ENCODE measurements at regions of chr2 and their contacts with region 1.

Region 1: GRCh38 chr2:85524336-85524933 is 14.5 kb upstream of the MAT2A start:
- DNase-seq: no peak
- ATAC-seq: peak; percentile 32
- H3K4me3 ChIP-seq: no peak overlapping the region
- H3K4me3 Mint-ChIP-seq: no peak overlapping the region
- H3K27ac ChIP-seq: no peak overlapping the region
- H3K27ac Mint-ChIP-seq: peak overlapping the region in 1 of 9 donors; percentile 40
- H3K4me1 ChIP-seq: no peaks in the 10 kb centered on the region
- H3K4me1 Mint-ChIP-seq: peaks cover 0 to 5% (median 0%) of the 10 kb centered on the region in 7 donors
- H3K27me3 ChIP-seq: no peaks in the 10 kb centered on the region
- H3K27me3 Mint-ChIP-seq: peaks cover 0 to 26% (median 5%) of the 10 kb centered on the region in 5 donors

Region 2: DNA sequence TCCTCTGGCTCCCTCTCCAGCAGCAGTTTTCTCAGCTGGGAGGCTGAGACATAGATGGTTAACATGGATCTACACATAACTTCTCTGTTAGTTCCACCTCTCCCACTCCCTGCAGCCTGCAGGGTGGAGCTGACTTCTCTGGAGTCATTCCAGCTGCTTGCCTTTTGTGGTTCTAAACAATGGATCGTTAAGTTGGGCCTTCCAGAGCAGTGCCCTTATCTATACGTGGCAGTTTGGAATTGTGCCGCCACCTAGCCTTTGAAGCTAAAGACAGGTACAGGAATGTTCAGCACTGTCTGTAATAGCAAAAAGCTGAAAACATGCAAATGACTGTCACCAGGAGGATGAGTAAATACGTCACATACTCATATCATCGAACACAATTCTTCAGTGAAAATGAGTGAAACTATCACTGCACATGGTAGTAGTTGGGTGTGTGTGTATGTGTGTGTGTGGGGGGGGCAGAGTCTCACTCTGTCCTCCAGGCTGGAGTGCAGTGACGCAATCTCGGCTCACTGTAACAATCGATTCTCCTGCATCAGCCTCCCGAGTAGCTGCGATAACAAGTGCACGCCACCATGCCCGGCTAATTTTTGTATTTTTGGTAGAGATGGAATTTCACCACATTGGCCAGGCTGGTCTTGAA is 55.6 kb before region 1 on chr2:
- CTCF ChIA-PET with region 1: no interaction called
- POLR2A ChIA-PET with region 1: no interaction called
- intact Hi-C with region 1: loop called in 1 of 2 experiments (anchors 10 kb)
- DNase-seq: no peak
- ATAC-seq: no peak
- H3K4me3 ChIP-seq: no peak overlapping the region
- H3K4me3 Mint-ChIP-seq: no peak overlapping the region
- H3K27ac ChIP-seq: no peak overlapping the region
- H3K27ac Mint-ChIP-seq: no peak overlapping the region
- H3K4me1 ChIP-seq: no peaks in the 10 kb centered on the region
- H3K4me1 Mint-ChIP-seq: peaks cover 0 to 1% (median 0%) of the 10 kb centered on the region in 7 donors
- H3K27me3 ChIP-seq: no peaks in the 10 kb centered on the region
- H3K27me3 Mint-ChIP-seq: peaks cover 0 to 5% (median 0%) of the 10 kb centered on the region in 5 donors

Region 3: GRCh38 chr2:85485815-85486214 is 38.6 kb before region 1 on chr2:
- CTCF ChIA-PET with region 1: no interaction called
- POLR2A ChIA-PET with region 1: no interaction called
- intact Hi-C with region 1: no loop called
- DNase-seq: no peak
- ATAC-seq: no peak
- H3K4me3 ChIP-seq: no peak overlapping the region
- H3K4me3 Mint-ChIP-seq: no peak overlapping the region
- H3K27ac ChIP-seq: no peak overlapping the region
- H3K27ac Mint-ChIP-seq: no peak overlapping the region
- H3K4me1 ChIP-seq: no peaks in the 10 kb centered on the region
- H3K4me1 Mint-ChIP-seq: no peaks in the 10 kb centered on the region
- H3K27me3 ChIP-seq: no peaks in the 10 kb centered on the region
- H3K27me3 Mint-ChIP-seq: peaks cover 0 to 3% (median 0%) of the 10 kb centered on the region in 5 donors

Measured in naive thymus-derived CD4-positive, alpha-beta T cell (primary cell).